Transverse colon (tissue), 4 donors: ENCODE measurements at regions of chr12 and their contacts with region 1.

Region 1: DNA sequence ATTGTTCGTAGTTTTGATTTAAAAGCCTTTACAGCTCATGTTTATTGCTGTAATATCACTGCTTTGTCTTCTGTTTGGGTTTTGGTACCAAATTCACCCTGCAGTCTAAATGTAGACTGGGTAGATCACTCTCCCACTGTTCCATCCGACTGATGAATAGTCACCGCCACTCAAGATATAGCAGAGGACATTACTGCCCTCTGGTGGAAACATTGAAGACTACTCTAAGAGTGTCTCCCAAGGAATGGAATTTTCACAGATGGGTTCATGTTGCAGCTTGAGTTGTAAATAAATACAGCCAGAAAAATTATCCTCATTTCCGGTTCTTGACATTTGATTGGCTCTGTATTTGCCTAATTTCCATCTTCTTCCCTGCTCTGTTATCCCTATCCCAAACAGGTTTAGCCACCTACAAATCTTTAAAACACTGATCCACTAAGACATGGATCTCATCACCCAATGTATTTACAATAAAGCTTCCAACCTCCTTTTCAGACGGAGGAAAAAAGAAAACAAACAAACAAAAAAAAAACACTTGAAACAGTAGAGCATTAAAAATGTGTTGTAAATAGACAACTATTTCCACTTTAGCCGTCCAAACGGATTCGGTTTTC is 198.3 kb upstream of the CPNE8 start:
- DNase-seq: no peak
- H3K4me3 ChIP-seq: no peak overlapping the region
- H3K27ac ChIP-seq: no peak overlapping the region
- H3K4me1 ChIP-seq: no peaks in the 10 kb centered on the region
- H3K27me3 ChIP-seq: no peaks in the 10 kb centered on the region
- CTCF ChIP-seq: peak; percentile 69 to 80 (median 74)
- EP300 ChIP-seq: no peak
- POLR2A ChIP-seq: no peak

Region 2: DNA sequence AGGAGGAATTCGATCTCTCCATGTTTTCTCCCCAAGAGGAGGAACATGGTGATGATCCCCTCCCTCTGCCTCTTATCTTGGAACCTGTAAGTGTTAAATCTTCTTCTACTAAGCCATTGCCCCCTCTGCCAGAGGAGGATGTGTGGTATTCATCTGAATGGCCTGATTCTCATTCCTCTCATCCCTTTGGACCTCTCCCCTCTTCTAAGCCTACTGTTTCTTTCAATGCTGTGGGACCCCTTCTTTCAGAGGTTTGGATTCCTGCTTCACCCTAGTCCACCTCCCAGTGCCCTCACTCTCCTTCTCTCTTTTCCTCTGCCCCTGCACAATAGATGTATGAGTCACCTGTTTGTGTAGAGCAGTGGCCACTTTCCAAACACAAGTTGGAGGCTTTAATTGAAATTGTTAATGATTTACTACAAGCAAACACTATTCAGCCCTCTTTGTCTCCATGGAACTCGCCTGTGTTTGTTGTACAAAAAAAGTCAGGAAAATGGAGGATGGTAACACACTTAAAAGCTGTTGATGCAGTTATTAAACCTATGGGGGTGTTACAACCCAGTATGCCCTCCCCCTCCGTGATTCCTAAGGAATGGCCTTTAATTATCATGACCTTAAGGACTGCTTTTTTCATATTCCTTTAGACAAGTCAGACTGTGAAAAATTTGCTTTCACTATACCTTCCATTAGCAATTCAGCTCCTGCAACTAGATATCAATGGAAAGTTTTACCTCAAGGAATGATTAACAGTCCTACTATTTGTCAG is 979.2 kb before region 1 on chr12:
- in situ Hi-C with region 1: loop called in 1 of 4 experiments (anchors 25 kb)
- intact Hi-C with region 1: no loop called
- DNase-seq: peak; percentile 10
- H3K4me3 ChIP-seq: no peak overlapping the region
- H3K27ac ChIP-seq: no peak overlapping the region
- H3K4me1 ChIP-seq: peaks cover 0 to 6% (median 1%) of the 10 kb centered on the region in 4 donors
- H3K27me3 ChIP-seq: no peaks in the 10 kb centered on the region
- CTCF ChIP-seq: no peak
- EP300 ChIP-seq: no peak
- POLR2A ChIP-seq: no peak

Region 3: GRCh38 chr12:38138225-38139221 is 965.1 kb before region 1 on chr12:
- in situ Hi-C with region 1: loop called in 1 of 4 experiments (anchors 10 kb)
- intact Hi-C with region 1: no loop called
- DNase-seq: peak; percentile 71
- H3K4me3 ChIP-seq: peak overlapping the region in 3 of 4 donors; percentile 13 to 54 (median 24)
- H3K27ac ChIP-seq: no peak overlapping the region
- H3K4me1 ChIP-seq: peaks cover 0 to 8% (median 7%) of the 10 kb centered on the region in 4 donors
- H3K27me3 ChIP-seq: peaks cover 14% of the 10 kb centered on the region
- CTCF ChIP-seq: peak; percentile 95 to 99 (median 98)
- EP300 ChIP-seq: no peak
- POLR2A ChIP-seq: no peak

Region 4: GRCh38 chr12:38332814-38333213 is 770.8 kb before region 1 on chr12:
- in situ Hi-C with region 1: loop called (anchors 5 to 25 kb)
- intact Hi-C with region 1: loop called (anchors 10 kb)
- DNase-seq: no peak
- H3K4me3 ChIP-seq: no peak overlapping the region
- H3K27ac ChIP-seq: no peak overlapping the region
- H3K4me1 ChIP-seq: peaks cover 0 to 3% (median 0%) of the 10 kb centered on the region in 4 donors
- H3K27me3 ChIP-seq: no peaks in the 10 kb centered on the region
- CTCF ChIP-seq: no peak
- EP300 ChIP-seq: no peak
- POLR2A ChIP-seq: no peak

Region 5: DNA sequence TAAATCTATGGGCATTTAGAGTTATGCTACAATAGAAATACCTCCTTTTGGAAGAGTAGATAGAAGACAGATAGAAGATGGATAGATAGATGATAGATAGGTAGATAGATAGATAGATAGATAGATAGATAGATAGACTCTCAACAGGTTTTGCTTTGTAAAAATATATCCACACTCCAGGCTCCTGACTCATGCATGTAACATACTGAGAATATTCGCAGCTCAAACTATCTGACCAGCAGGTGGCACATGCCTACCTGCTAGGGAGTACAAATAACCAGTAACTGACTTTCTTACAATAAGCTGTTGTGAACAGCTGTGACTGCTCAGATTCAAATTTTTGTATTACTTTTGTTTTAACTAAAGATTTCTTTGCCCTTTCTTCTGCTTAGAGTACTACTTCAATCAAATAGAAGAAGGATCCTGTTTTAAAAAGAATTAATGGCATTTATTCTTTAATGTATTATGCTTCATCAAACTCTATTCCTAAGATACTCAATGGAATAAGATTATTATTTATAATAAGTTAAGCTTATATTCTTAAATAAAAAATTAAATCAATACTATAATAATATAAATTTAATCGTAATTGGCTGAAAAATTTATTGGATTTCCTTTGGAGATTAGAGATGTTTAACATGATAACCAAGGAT is 182.5 kb before region 1 on chr12:
- in situ Hi-C with region 1: loop called in 3 of 4 experiments (anchors 10 to 25 kb)
- intact Hi-C with region 1: no loop called
- DNase-seq: peak; percentile 56
- H3K4me3 ChIP-seq: no peak overlapping the region
- H3K27ac ChIP-seq: no peak overlapping the region
- H3K4me1 ChIP-seq: no peaks in the 10 kb centered on the region
- H3K27me3 ChIP-seq: no peaks in the 10 kb centered on the region
- CTCF ChIP-seq: peak; percentile 46 to 61 (median 54)
- EP300 ChIP-seq: no peak
- POLR2A ChIP-seq: no peak